ENCODE measurements at regions of chrX and their contacts with region 1.

Region 1: GRCh38 chrX:136028251-136028984 is 43.2 kb downstream of the SLC9A6 start:
- DNase-seq: no peak
- H3K4me3 ChIP-seq: no peak overlapping the region
- H3K27ac ChIP-seq: peak overlapping the region; percentile 68
- H3K4me1 ChIP-seq: peaks cover 10% of the 10 kb centered on the region
- H3K27me3 ChIP-seq: no peaks in the 10 kb centered on the region
- CTCF ChIP-seq: peak; percentile 38 to 77 (median 43)
- POLR2A ChIP-seq: no peak

Region 2: GRCh38 chrX:136159611-136160025 is 131.2 kb after region 1 on chrX:
- intact Hi-C with region 1: loop called (anchors 10 kb)
- DNase-seq: no peak
- H3K4me3 ChIP-seq: no peak overlapping the region
- H3K27ac ChIP-seq: no peak overlapping the region
- H3K4me1 ChIP-seq: peaks cover 7% of the 10 kb centered on the region
- H3K27me3 ChIP-seq: no peaks in the 10 kb centered on the region
- CTCF ChIP-seq: no peak
- POLR2A ChIP-seq: no peak

Region 3: GRCh38 chrX:136268051-136269048 is 239.9 kb after region 1 on chrX:
- intact Hi-C with region 1: loop called (anchors 5 kb)
- DNase-seq: no peak
- H3K4me3 ChIP-seq: no peak overlapping the region
- H3K27ac ChIP-seq: no peak overlapping the region
- H3K4me1 ChIP-seq: no peaks in the 10 kb centered on the region
- H3K27me3 ChIP-seq: no peaks in the 10 kb centered on the region
- CTCF ChIP-seq: peak in 2 of 3 experiments; percentile 47 to 55
- POLR2A ChIP-seq: no peak